ENCODE measurements at regions of chr11 and their contacts with region 1.

Region 1: DNA sequence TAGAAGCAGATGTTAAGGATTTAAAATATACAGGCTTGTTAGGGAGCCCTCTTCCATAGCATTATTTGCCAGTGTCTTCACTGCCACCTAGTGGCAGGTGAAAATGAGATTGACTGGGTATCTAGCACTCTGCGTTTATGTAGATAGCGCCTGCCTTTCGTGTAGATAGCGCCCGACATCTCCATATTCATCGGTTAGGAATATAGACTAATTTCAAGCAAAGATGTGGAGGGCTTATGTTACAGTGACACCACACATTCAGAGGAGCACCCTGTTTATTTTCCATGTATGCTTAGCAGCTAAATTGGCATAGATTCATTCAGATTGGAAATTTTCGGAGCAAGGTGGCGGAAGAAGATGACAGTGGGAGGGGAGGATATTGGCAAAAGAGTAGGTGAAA is 72.0 kb downstream of the SLC5A12 start:
- DNase-seq: peak; percentile 60
- H3K4me3 ChIP-seq: no peak overlapping the region
- H3K27ac ChIP-seq: no peak overlapping the region
- H3K4me1 ChIP-seq: no peaks in the 10 kb centered on the region
- CTCF ChIP-seq: peak; percentile 88

Region 2: GRCh38 chr11:26286472-26287066 is 363.3 kb before region 1 on chr11:
- CTCF ChIA-PET with region 1: no interaction called
- POLR2A ChIA-PET with region 1: no interaction called
- intact Hi-C with region 1: loop called (anchors 5 kb)
- DNase-seq: peak; percentile 42
- H3K4me3 ChIP-seq: no peak overlapping the region
- H3K27ac ChIP-seq: no peak overlapping the region
- H3K4me1 ChIP-seq: peaks cover 5% of the 10 kb centered on the region
- CTCF ChIP-seq: peak; percentile 83

Region 3: GRCh38 chr11:26297189-26297975 is 352.5 kb before region 1 on chr11:
- CTCF ChIA-PET with region 1: no interaction called
- POLR2A ChIA-PET with region 1: no interaction called
- intact Hi-C with region 1: loop called (anchors 1 kb)
- DNase-seq: peak; percentile 69
- H3K4me3 ChIP-seq: no peak overlapping the region
- H3K27ac ChIP-seq: no peak overlapping the region
- H3K4me1 ChIP-seq: no peaks in the 10 kb centered on the region
- CTCF ChIP-seq: peak; percentile 92

Region 4: DNA sequence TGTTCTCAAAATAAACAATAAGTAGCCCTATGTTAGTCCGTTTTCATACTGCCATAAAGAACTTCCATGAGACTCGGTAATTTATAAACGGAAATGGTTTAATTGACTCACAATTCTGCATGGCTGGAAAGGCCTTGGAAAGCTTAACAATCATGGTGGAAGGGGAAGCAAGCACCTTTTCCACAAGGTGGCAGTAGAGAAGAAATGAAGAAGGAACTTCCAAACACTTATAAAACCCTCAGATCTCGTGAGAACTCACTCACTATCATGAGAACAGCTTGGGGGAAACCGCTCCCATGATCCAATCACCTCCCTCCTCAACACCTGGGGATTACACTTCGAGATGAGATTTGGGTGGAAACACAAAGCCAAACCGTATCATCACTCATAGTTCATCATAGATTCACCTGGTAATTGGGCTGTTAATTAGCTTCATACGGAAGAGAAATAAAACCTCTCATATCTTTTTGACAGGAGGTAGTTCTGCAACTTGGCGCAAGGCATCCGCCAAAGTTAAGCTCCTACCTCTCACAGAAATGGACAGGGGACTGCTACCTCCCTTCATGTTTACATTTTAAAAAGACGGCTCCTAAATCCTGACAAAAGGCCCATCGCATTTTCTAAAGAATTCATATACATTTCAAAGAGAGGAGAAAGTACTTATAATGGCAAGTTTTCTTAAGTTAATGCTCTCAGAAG is 126.8 kb before region 1 on chr11:
- CTCF ChIA-PET with region 1: no interaction called
- POLR2A ChIA-PET with region 1: interaction called, 3 read pairs
- intact Hi-C with region 1: loop called (anchors 5 kb)
- DNase-seq: peak; percentile 28
- H3K4me3 ChIP-seq: no peak overlapping the region
- H3K27ac ChIP-seq: no peak overlapping the region
- H3K4me1 ChIP-seq: no peaks in the 10 kb centered on the region
- CTCF ChIP-seq: peak; percentile 69

Region 5: DNA sequence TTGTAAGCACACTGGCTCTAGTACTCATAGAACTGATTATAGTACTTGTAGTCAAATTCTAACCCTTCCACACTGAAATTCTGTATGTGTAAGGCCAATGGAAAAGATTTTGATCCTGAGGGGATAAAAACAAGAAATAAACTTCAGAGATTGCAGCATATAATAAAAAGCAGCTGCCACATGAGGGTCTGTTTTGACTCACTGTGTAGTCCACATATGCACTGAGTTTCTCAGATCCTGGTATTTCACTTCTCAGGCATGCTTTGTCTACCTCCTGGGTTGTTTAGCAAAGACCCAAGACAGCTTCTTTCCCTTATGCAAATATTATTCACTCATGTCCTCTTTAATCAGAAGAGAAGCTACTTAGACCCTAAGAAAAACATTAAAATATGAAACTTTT is 143.1 kb after region 1 on chr11:
- CTCF ChIA-PET with region 1: no interaction called
- POLR2A ChIA-PET with region 1: no interaction called
- intact Hi-C with region 1: no loop called
- DNase-seq: no peak
- H3K4me3 ChIP-seq: no peak overlapping the region
- H3K27ac ChIP-seq: no peak overlapping the region
- H3K4me1 ChIP-seq: no peaks in the 10 kb centered on the region
- CTCF ChIP-seq: no peak

Measured in OCI-LY7 (cell line).